Activated naive CD4-positive, alpha-beta T cell treated with anti-CD3 and anti-CD28 coated beads, Interleukin-2, amount 10 ng/mL, durations not matched to agents 7 days and 5 days (primary cell): ENCODE measurements at regions of chrX and their contacts with region 1.

Region 1: GRCh38 chrX:10083809-10084208 is 73.0 kb upstream of the CLCN4 start:
- DNase-seq: no peak
- H3K4me3 Mint-ChIP-seq: no peak overlapping the region
- H3K27ac Mint-ChIP-seq: peak overlapping the region; percentile 90
- H3K4me1 Mint-ChIP-seq: peaks cover 43% of the 10 kb centered on the region
- H3K27me3 Mint-ChIP-seq: no peaks in the 10 kb centered on the region

Region 2: GRCh38 chrX:10050481-10050880 is 33.3 kb before region 1 on chrX:
- CTCF ChIA-PET with region 1: no interaction called
- DNase-seq: no peak
- H3K4me3 Mint-ChIP-seq: no peak overlapping the region
- H3K27ac Mint-ChIP-seq: no peak overlapping the region
- H3K4me1 Mint-ChIP-seq: peaks cover 8% of the 10 kb centered on the region
- H3K27me3 Mint-ChIP-seq: no peaks in the 10 kb centered on the region

Region 3: GRCh38 chrX:10111364-10112148 is 27.7 kb after region 1 on chrX:
- CTCF ChIA-PET with region 1: interaction called, 12 read pairs
- DNase-seq: peak; percentile 66
- H3K4me3 Mint-ChIP-seq: peak overlapping the region; percentile 48
- H3K27ac Mint-ChIP-seq: peak overlapping the region; percentile 98
- H3K4me1 Mint-ChIP-seq: peaks cover 61% of the 10 kb centered on the region
- H3K27me3 Mint-ChIP-seq: no peaks in the 10 kb centered on the region

Region 4: GRCh38 chrX:10119399-10119990 is 35.7 kb after region 1 on chrX:
- CTCF ChIA-PET with region 1: interaction called, 10 read pairs
- DNase-seq: peak; percentile 66
- H3K4me3 Mint-ChIP-seq: no peak overlapping the region
- H3K27ac Mint-ChIP-seq: no peak overlapping the region
- H3K4me1 Mint-ChIP-seq: peaks cover 8% of the 10 kb centered on the region
- H3K27me3 Mint-ChIP-seq: no peaks in the 10 kb centered on the region